ENCODE measurements at regions of chr19 and their contacts with region 1.

Region 1: GRCh38 chr19:12974301-12975220 is 5.2 kb downstream of the DAND5 start:
- DNase-seq: no peak
- ATAC-seq: no peak
- H3K4me3 ChIP-seq: no peak overlapping the region
- H3K27ac ChIP-seq: no peak overlapping the region
- H3K4me1 ChIP-seq: no peaks in the 10 kb centered on the region
- H3K27me3 ChIP-seq: no peaks in the 10 kb centered on the region
- CTCF ChIP-seq: no peak

Region 2: DNA sequence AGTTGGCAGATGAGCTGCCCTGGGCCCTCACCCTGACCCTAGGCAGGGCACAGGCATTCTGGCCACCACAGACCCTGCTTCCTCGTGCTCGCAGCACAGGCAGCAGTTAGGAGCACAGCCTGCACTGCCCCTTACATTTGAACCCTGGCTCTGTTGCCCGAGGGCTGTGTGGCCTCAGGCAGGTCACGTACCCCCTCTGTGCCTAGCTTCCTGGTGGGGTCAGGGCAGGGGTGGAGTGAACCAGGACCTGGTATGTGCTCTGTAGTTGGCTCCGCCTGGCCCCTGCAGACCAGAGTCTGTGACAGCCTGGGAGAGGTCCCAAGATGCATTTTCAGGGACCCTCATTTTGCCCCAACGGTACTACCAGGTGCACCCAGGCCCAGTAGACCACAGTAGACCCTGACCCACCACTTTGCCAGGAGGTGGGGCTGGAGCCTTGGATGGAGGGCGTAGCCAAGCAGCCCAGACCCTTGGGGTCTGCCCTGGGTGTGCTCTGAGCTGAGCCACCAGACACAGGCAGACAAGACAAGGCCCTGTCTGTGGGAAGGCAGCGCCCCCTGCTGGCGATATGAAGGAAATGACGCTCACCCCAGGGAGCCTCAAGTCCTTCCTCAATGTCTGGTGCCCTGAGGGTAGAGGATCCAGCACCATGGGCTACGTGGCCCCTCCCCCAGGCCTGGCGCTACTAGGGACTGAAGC is 119.0 kb after region 1 on chr19:
- intact Hi-C with region 1: loop called (anchors 10 kb)
- DNase-seq: peak; percentile 88
- ATAC-seq: peak; percentile 80
- H3K4me3 ChIP-seq: no peak overlapping the region
- H3K27ac ChIP-seq: peak overlapping the region; percentile 72
- H3K4me1 ChIP-seq: peaks cover 44% of the 10 kb centered on the region
- H3K27me3 ChIP-seq: no peaks in the 10 kb centered on the region
- CTCF ChIP-seq: peak; percentile 92

Region 3: GRCh38 chr19:13262450-13262849 is 287.9 kb after region 1 on chr19:
- intact Hi-C with region 1: loop called (anchors 10 kb)
- DNase-seq: no peak
- ATAC-seq: peak; percentile 79
- H3K4me3 ChIP-seq: no peak overlapping the region
- H3K27ac ChIP-seq: no peak overlapping the region
- H3K4me1 ChIP-seq: no peaks in the 10 kb centered on the region
- H3K27me3 ChIP-seq: no peaks in the 10 kb centered on the region
- CTCF ChIP-seq: peak; percentile 61